Calu3 (cell line): ENCODE measurements at regions of chr12 and their contacts with region 1.

Region 1: DNA sequence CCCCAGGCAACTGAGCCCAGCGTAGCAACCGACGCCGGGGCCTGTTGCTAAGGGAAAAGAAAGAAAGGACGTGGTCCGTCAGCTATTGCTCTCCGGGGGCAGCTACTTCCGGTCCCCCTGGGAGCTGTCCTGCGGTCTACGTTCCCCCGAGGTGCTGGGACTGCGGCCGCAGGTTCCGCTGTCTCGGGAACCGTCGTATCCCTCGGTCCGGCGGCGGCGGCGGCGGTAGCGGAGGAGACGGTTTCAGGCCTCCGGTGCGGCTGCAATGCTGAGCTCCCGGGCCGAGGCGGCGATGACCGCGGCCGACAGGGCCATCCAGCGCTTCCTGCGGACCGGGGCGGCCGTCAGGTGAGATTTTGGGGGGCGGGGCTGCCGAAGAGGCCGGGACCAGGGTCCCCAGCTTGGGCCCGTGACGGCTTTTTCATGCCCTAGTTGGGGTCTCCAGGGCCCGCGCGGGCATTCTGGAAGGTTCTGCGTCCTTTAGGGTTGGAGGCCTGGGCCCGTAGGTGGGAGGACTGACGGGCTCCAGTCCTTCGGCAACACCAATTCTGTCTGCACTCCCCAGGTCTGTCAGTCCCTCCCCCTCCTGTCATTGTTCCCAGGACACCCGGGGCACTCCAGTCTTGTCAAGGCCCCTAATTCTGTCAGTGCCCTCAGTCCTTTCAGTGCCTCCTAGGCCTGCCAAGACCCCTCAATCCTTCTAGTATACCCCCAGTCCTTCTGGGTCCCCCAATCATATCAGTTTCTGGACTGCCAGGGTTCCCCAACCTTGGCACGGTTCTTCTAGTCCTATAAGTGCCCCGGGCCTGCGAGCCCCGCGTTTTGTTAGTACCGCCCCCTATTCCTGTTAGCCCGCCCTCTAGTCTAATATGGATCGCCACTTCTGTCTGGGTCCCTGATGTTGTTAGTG is at the start of gene USP30:
- DNase-seq: peak; percentile 90
- H3K4me3 Mint-ChIP-seq: peak within 1 kb of the TSS; percentile 93
- H3K27ac Mint-ChIP-seq: peak within 1 kb of the TSS; percentile 85
- H3K4me1 Mint-ChIP-seq: peaks cover 11% of the 10 kb centered on the region
- H3K27me3 Mint-ChIP-seq: no peaks in the 10 kb centered on the region
- CTCF ChIP-seq: no peak
- total RNA-seq, gene USP30: 9.6 and 13.0 TPM in 2 replicates

Region 2: GRCh38 chr12:109020796-109021380 is 31.8 kb before region 1 on chr12 and contains the start of gene SVOP:
- CTCF ChIA-PET with region 1: no interaction called
- intact Hi-C with region 1: loop called (anchors 1 kb)
- DNase-seq: peak; percentile 81
- H3K4me3 Mint-ChIP-seq: no peak within 1 kb of the TSS
- H3K27ac Mint-ChIP-seq: no peak within 1 kb of the TSS
- H3K4me1 Mint-ChIP-seq: no peaks in the 10 kb centered on the region
- H3K27me3 Mint-ChIP-seq: peaks cover 39% of the 10 kb centered on the region
- CTCF ChIP-seq: no peak
- total RNA-seq, gene SVOP: not detected in 2 replicates